Prostate gland (tissue), 2 donors: ENCODE measurements at regions of chr12 and their contacts with region 1.

Region 1: DNA sequence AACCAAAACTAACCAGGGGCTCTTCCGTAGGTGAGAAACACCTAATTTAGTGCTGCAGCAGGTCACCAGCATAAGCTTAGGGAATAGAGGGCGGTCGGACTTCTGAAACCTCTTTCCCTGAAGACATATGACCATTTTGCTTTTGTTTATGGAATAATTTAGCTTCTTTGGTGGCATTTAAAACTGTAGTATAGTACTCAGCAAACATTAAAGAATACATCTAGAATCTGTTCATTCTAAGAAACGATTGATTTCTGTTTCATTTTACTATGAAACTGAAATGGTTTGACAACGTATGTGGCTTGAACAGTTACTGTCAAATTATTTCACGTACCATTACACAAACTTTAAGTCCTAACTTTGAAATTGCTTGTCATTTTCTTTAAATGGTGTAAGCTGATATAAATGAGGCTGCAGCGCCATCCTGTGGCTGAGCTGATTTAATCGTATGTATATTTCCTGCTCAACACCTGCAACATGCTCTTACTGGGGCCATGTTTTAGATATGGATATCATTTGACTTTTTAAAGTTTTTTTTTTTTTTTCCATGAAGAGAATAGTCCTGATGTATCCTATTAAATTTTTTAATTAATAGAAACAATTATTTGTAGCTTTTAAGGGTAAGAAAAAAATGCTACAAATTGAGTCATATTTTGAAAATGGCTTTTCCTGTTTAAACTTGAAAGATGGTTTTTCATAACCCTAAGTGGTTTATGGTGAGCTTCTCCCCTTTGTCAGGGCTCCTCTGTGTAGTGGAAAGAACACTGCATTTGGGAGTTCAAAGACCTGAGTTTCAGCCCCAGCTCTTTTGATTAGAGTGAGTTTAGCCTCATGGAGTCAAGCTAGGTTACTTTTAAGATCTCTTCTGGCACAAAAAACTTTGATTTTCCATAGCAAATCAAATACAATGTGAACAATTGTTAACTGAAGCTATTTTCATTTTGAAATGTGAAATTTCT is 27.4 kb downstream of the CFAP54 start:
- DNase-seq: peak; percentile 62
- H3K4me3 ChIP-seq: no peak overlapping the region
- H3K27ac ChIP-seq: no peak overlapping the region
- H3K4me1 ChIP-seq: no peaks in the 10 kb centered on the region
- H3K27me3 ChIP-seq: no peaks in the 10 kb centered on the region
- CTCF ChIP-seq: peak; percentile 13 to 82 (median 69)
- POLR2A ChIP-seq: no peak

Region 2: GRCh38 chr12:96061864-96062453 is 454.8 kb before region 1 on chr12:
- intact Hi-C with region 1: loop called (anchors 5 kb)
- DNase-seq: peak; percentile 71
- H3K4me3 ChIP-seq: no peak overlapping the region
- H3K27ac ChIP-seq: no peak overlapping the region
- H3K4me1 ChIP-seq: no peaks in the 10 kb centered on the region
- H3K27me3 ChIP-seq: no peaks in the 10 kb centered on the region
- CTCF ChIP-seq: peak; percentile 84 to 86 (median 84)
- POLR2A ChIP-seq: no peak

Region 3: DNA sequence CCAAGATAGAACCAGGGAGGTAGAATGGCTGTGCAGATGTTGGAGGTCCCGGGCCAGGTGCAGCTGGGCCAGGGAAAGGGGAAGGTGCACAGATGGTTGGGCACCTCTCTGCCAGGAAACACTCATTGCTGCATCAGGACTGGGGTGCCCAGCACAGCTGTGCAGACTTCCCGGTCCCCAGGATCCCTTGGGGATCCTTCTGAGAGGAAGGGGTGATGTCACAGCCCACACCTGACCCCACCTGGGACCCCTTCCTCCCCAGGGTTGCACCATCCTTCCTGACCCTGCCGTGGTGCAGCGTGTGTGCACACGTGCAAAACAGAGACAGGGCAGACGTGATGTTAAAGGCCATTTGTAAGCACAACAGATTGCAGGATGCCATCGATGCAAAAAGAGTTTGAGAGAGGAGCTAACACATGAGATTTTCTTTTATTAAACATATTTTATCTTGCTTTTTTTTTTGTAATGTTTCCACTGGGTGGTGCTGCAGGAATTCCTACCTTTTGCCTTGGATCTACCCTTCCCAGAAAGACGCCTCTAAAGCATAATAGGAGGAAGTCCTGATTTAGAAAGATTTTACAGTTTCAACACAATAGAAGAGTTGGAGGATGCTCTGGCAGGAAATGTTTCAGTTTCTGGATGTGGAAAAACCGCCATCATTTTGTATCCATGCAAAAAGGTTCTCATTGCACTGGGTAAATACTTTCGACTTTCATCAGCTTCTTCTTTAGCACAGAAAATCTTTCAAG is 307.8 kb before region 1 on chr12:
- intact Hi-C with region 1: loop called (anchors 5 kb)
- DNase-seq: no peak
- H3K4me3 ChIP-seq: no peak overlapping the region
- H3K27ac ChIP-seq: no peak overlapping the region
- H3K4me1 ChIP-seq: no peaks in the 10 kb centered on the region
- H3K27me3 ChIP-seq: no peaks in the 10 kb centered on the region
- CTCF ChIP-seq: no peak
- POLR2A ChIP-seq: no peak

Region 4: GRCh38 chr12:96285158-96285557 is 231.6 kb before region 1 on chr12:
- intact Hi-C with region 1: loop called (anchors 10 kb)
- DNase-seq: no peak
- H3K4me3 ChIP-seq: no peak overlapping the region
- H3K27ac ChIP-seq: no peak overlapping the region
- H3K4me1 ChIP-seq: no peaks in the 10 kb centered on the region
- H3K27me3 ChIP-seq: no peaks in the 10 kb centered on the region
- CTCF ChIP-seq: no peak
- POLR2A ChIP-seq: no peak

Region 5: GRCh38 chr12:96534339-96534738 is 17.6 kb after region 1 on chr12:
- intact Hi-C with region 1: no loop called
- DNase-seq: no peak
- H3K4me3 ChIP-seq: no peak overlapping the region
- H3K27ac ChIP-seq: no peak overlapping the region
- H3K4me1 ChIP-seq: no peaks in the 10 kb centered on the region
- H3K27me3 ChIP-seq: no peaks in the 10 kb centered on the region
- CTCF ChIP-seq: no peak
- POLR2A ChIP-seq: no peak

Region 6: GRCh38 chr12:96831346-96831745 is 314.6 kb after region 1 on chr12:
- intact Hi-C with region 1: no loop called
- DNase-seq: no peak
- H3K4me3 ChIP-seq: no peak overlapping the region
- H3K27ac ChIP-seq: no peak overlapping the region
- H3K4me1 ChIP-seq: no peaks in the 10 kb centered on the region
- H3K27me3 ChIP-seq: no peaks in the 10 kb centered on the region
- CTCF ChIP-seq: no peak
- POLR2A ChIP-seq: no peak